Common myeloid progenitor, CD34-positive (primary cell): ENCODE measurements at regions of chr13 and their contacts with region 1.

Region 1: DNA sequence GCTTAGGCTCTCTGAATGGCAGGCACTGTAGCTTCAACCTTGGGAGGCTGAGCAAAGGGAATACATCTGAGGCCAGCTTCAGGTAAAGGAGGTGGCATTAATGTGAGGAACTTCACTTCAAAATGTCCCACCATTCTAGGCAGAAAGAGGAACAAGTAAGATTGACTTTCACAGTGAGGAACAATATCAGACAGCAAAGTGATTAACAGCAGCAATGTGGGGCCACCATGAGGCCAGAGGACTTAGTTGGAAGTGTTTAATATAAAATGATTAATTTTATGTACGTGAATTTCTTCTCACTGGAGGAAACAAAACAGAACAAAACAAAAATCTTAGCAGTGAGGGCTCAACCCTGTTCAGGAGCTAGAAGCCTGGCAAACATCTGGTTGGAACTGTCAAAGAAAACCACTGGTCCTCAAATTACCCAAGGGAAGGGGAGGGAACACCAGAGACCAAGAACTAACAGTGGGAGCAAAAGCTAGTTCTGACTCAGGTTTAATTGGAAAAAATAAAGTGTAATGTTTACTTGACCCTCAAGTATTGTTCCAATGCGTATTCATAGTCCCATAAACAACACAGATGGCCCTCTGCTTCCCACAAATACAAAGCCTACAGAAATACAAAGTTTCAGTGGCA is 43.9 kb upstream of the FRY start:
- DNase-seq: peak; percentile 57 to 88 (median 83)
- H3K4me3 ChIP-seq: no peak overlapping the region
- H3K27ac ChIP-seq: no peak overlapping the region
- H3K4me1 ChIP-seq: peaks cover under 1 to 12% (median 7%) of the 10 kb centered on the region in 4 experiments
- H3K27me3 ChIP-seq: no peaks in the 10 kb centered on the region

Region 2: GRCh38 chr13:31919971-31920726 is 67.5 kb before region 1 on chr13:
- CTCF ChIA-PET with region 1: interaction called, 15 read pairs
- POLR2A ChIA-PET with region 1: no interaction called
- DNase-seq: peak; percentile 66 to 72 (median 71)
- H3K4me3 ChIP-seq: peak overlapping the region in 2 of 7 experiments; percentile 6 to 35
- H3K27ac ChIP-seq: no peak overlapping the region
- H3K4me1 ChIP-seq: peaks cover 16 to 34% (median 21%) of the 10 kb centered on the region in 4 experiments
- H3K27me3 ChIP-seq: peaks cover 0 to 2% (median 0%) of the 10 kb centered on the region in 5 experiments

Region 3: DNA sequence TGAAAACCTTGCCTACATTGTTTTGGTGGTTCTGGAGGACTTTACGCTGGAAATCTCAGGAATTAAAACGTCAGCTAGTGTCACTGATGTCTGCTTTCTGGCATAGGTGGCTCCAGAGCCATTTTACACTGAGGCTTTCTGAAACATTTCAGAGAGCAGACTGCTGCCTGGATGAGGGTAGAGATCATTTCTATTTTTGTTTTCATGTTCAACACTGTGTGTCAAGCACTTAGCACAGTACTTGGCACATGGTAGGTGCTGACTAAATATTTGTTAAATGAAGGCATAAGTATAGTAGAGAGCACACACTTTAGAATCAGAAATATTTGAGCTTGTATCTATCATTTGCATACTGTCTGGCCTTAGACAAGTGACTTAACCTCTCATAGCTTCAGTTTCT is 15.2 kb before region 1 on chr13:
- CTCF ChIA-PET with region 1: no interaction called
- POLR2A ChIA-PET with region 1: no interaction called
- DNase-seq: no peak
- H3K4me3 ChIP-seq: no peak overlapping the region
- H3K27ac ChIP-seq: no peak overlapping the region
- H3K4me1 ChIP-seq: peaks cover 0 to 8% (median 0%) of the 10 kb centered on the region in 4 experiments
- H3K27me3 ChIP-seq: no peaks in the 10 kb centered on the region

Region 4: DNA sequence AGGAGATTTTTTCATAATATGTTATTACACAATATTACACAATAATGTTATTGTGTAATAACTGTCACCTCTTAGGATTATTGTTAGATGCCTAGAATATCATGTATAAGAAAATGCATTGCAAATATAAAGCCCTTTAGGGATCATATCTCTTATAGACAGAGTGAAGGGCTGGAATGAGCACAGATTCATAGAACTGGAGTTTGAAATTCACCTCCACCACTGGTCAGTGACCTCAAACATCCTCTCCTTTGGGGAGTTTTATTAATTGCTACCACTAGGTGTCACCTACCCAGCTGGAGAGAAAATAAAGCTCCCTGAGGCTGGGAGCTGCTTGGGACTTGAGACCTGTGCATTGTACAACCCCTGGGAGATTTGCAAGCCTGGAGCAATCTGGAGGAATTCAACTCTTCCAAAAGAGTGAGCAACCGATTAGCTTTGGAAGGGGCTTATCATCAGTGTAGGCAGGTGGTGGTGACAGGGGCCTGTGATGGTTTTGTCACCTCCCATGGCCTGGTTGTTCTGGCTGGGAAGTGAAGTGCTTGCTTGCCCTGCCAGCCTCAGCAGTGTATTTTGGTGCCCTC is 13.6 kb after region 1 on chr13:
- CTCF ChIA-PET with region 1: interaction called, 37 read pairs
- POLR2A ChIA-PET with region 1: no interaction called
- DNase-seq: peak; percentile 34 to 62 (median 60)
- H3K4me3 ChIP-seq: no peak overlapping the region
- H3K27ac ChIP-seq: no peak overlapping the region
- H3K4me1 ChIP-seq: peaks cover 0 to 6% (median 1%) of the 10 kb centered on the region in 4 experiments
- H3K27me3 ChIP-seq: no peaks in the 10 kb centered on the region